ENCODE measurements at regions of chr7 and their contacts with region 1.

Region 1: GRCh38 chr7:37208528-37208927 is 240.1 kb downstream of the ELMO1 start:
- DNase-seq: peak; percentile 73
- H3K4me3 ChIP-seq: no peak overlapping the region
- H3K27ac ChIP-seq: no peak overlapping the region
- H3K4me1 ChIP-seq: no peaks in the 10 kb centered on the region
- H3K27me3 ChIP-seq: no peaks in the 10 kb centered on the region
- CTCF ChIP-seq: peak; percentile 31 to 61
- POLR2A ChIP-seq: no peak

Region 2: GRCh38 chr7:37376386-37376785 is 167.9 kb after region 1 on chr7:
- CTCF ChIA-PET with region 1: no interaction called
- POLR2A ChIA-PET with region 1: no interaction called
- dilution Hi-C with region 1: no loop called
- intact Hi-C with region 1: no loop called
- DNase-seq: no peak
- H3K4me3 ChIP-seq: no peak overlapping the region
- H3K27ac ChIP-seq: no peak overlapping the region
- H3K4me1 ChIP-seq: no peaks in the 10 kb centered on the region
- H3K27me3 ChIP-seq: no peaks in the 10 kb centered on the region
- CTCF ChIP-seq: no peak
- POLR2A ChIP-seq: no peak

Region 3: GRCh38 chr7:37510043-37510634 is 301.6 kb after region 1 on chr7:
- CTCF ChIA-PET with region 1: interaction called, 71 read pairs
- POLR2A ChIA-PET with region 1: no interaction called
- dilution Hi-C with region 1: no loop called
- intact Hi-C with region 1: loop called (anchors 1 kb)
- DNase-seq: peak; percentile 46
- H3K4me3 ChIP-seq: no peak overlapping the region
- H3K27ac ChIP-seq: no peak overlapping the region
- H3K4me1 ChIP-seq: peaks cover 3% of the 10 kb centered on the region
- H3K27me3 ChIP-seq: peaks cover 11 to 14% of the 10 kb centered on the region in 2 experiments
- CTCF ChIP-seq: peak; percentile 72 to 76
- POLR2A ChIP-seq: no peak

Region 4: GRCh38 chr7:37833107-37833817 is 624.7 kb after region 1 on chr7:
- CTCF ChIA-PET with region 1: interaction called, 20 read pairs
- POLR2A ChIA-PET with region 1: no interaction called
- dilution Hi-C with region 1: no loop called
- intact Hi-C with region 1: loop called (anchors 1 kb)
- DNase-seq: peak; percentile 40
- H3K4me3 ChIP-seq: peak overlapping the region in 1 of 3 experiments; percentile 8
- H3K27ac ChIP-seq: no peak overlapping the region
- H3K4me1 ChIP-seq: no peaks in the 10 kb centered on the region
- H3K27me3 ChIP-seq: peaks cover 0 to 2% of the 10 kb centered on the region in 2 experiments
- CTCF ChIP-seq: peak; percentile 48 to 52
- POLR2A ChIP-seq: no peak

Measured in endothelial cell of umbilical vein (primary cell).